ENCODE measurements at regions of chr5 and their contacts with region 1.

Region 1: DNA sequence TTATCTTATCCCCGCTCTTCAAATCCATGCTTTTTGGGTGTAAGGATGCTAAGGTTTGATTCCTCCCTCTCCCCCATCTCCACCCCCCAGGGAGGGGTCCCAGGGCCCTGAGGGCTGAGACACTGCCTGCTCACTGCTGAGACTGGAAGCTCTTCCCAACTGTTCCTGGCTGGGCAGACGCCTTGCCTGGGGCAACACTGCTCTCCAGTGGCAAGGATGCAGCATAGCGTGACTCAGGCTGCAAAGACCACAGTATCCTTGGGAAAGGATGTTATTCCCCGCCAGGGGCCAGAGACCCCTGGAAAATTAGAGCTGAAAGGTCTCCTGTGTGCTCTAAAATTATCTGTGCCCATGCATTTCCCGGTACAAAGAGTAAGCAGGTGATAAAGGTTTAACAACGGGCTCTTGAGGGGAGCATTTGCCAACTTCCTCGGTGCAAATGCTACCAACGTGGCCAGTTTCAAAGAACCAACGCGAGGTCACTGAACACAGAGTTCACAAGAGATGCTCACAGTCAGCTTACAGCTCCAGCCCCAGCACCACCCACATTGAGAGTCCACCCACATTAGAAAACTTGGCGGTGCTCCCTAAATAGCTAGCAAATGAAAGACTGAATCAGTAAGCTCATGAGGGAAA is 271.9 kb downstream of the NSG2 start:
- DNase-seq: no peak
- ATAC-seq: peak; percentile 51; the same call in 1 of the 3 replicates
- H3K4me3 ChIP-seq: no peak overlapping the region
- H3K27ac ChIP-seq: no peak overlapping the region
- H3K4me1 ChIP-seq: no peaks in the 10 kb centered on the region
- H3K27me3 ChIP-seq: peaks cover 0 to 2% of the 10 kb centered on the region in 2 experiments; a peak in 2 of 4 replicates
- CTCF ChIP-seq: peak; percentile 77 to 82 (median 80)
- EP300 ChIP-seq: no peak
- POLR2A ChIP-seq: no peak
- RAD21 ChIP-seq: peak; percentile 83

Region 2: DNA sequence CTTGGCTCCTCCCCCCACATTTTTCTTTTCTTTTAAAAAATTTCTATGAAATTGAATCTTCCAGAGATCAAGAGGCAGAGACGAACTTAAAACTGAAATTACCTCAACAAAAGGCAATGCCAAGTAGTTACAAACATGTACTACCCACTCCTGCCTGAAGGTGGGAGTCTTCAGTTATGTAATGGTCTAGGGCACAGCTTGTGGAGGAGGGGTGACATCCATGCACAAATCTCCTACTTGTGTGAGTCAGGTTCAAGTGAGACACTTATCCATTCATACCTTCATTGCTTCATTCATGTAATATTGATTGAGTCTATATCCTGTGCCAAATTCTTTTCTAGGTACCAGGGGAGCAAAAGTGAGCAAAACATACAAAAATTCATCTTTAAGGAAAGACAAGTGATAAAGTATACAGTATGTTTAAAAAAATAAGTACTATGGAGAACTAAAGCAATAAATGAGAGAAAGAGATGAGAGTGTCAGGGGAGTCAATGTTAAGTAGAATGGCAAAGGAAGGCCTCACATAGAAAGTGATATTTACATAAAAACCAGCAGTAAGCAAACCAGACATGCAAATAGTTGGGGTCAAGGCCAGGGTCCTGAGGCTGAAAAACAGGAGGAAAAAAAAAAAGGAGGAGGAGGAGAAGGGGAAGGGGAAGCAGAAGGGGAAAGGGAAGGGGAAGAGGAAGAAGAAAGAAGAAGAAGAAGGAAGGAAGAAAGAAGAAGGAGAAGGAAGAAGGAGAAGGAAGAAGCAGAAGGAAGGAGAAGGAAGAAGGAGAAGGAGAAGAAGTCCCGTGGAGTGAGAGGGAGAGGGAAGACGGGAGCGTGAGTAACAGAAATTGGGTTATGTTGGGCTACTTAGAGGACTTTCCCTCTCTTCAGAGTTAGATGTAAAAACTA is 296.7 kb before region 1 on chr5:
- CTCF ChIA-PET with region 1: interaction called, 6 read pairs
- POLR2A ChIA-PET with region 1: no interaction called
- RAD21 ChIA-PET with region 1: interaction called, 3 read pairs
- SMC1A ChIA-PET with region 1: no interaction called
- in situ Hi-C with region 1: no loop called
- intact Hi-C with region 1: loop called (anchors 1 kb)
- DNase-seq: peak; percentile 1
- ATAC-seq: peak; percentile 72
- H3K4me3 ChIP-seq: no peak overlapping the region
- H3K27ac ChIP-seq: no peak overlapping the region
- H3K4me1 ChIP-seq: no peaks in the 10 kb centered on the region
- H3K27me3 ChIP-seq: peaks cover 3% of the 10 kb centered on the region in 2 experiments; a peak in 3 of 4 replicates
- CTCF ChIP-seq: peak; percentile 51 to 61 (median 55); a peak in 5 of 6 replicates
- EP300 ChIP-seq: no peak
- POLR2A ChIP-seq: no peak
- RAD21 ChIP-seq: peak; percentile 71

Region 3: GRCh38 chr5:174045470-174046025 is 271.8 kb before region 1 on chr5 and contains the start of gene NSG2:
- CTCF ChIA-PET with region 1: interaction called, 38 read pairs
- POLR2A ChIA-PET with region 1: no interaction called
- RAD21 ChIA-PET with region 1: interaction called, 38 read pairs
- SMC1A ChIA-PET with region 1: interaction called, 23 read pairs
- in situ Hi-C with region 1: loop called (anchors 5 kb)
- intact Hi-C with region 1: loop called (anchors 1 kb)
- DNase-seq: peak; percentile 16
- ATAC-seq: peak; percentile 99
- H3K4me3 ChIP-seq: no peak within 1 kb of the TSS
- H3K27ac ChIP-seq: no peak within 1 kb of the TSS
- H3K4me1 ChIP-seq: no peaks in the 10 kb centered on the region
- H3K27me3 ChIP-seq: no peaks in the 10 kb centered on the region
- CTCF ChIP-seq: peak; percentile 70 to 92 (median 74)
- EP300 ChIP-seq: no peak
- POLR2A ChIP-seq: no peak
- RAD21 ChIP-seq: peak; percentile 97
- polyA plus RNA-seq, gene NSG2: not detected

Measured in GM12878 (cell line).